ENCODE measurements at regions of chr1 and their contacts with region 1.

Region 1: DNA sequence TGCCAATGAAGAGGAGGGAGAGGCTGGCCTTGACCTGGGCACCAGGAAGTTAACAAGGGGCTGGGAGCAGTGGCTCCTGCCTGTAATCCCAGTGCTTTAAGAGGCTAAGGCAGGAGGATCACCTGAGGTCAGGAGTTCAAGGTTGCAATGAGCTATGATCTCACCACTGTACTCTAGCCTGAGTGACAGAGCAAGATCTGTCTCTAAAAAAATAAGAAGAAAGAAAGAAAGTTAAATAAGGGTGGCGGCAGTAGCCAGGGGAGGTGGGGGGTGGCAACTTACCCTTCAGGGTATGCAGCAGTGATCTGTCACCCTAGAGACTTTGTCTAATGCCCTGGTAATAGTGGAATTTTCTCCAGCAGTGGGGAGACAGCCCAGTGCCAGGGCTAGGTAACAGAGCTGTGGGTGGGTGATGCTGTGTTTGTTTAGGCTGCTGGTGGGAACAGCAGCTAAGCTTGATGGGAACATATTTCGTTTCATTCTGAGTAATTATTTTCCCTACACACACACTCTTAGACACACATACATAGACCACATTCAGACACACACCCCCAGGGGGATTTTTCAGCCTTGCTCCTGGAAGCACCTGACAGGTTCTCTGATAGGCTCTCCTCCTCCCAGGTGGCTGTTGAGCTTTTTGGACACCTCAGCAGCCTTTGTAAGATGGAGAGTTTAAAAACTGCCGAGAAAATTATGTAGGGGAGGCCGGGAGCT is 11.3 kb upstream of the SYT6 start:
- DNase-seq: no peak
- H3K4me3 ChIP-seq: no peak overlapping the region
- H3K27ac ChIP-seq: no peak overlapping the region
- H3K4me1 ChIP-seq: no peaks in the 10 kb centered on the region
- H3K27me3 ChIP-seq: peaks cover 3% of the 10 kb centered on the region
- CTCF ChIP-seq: no peak

Region 2: DNA sequence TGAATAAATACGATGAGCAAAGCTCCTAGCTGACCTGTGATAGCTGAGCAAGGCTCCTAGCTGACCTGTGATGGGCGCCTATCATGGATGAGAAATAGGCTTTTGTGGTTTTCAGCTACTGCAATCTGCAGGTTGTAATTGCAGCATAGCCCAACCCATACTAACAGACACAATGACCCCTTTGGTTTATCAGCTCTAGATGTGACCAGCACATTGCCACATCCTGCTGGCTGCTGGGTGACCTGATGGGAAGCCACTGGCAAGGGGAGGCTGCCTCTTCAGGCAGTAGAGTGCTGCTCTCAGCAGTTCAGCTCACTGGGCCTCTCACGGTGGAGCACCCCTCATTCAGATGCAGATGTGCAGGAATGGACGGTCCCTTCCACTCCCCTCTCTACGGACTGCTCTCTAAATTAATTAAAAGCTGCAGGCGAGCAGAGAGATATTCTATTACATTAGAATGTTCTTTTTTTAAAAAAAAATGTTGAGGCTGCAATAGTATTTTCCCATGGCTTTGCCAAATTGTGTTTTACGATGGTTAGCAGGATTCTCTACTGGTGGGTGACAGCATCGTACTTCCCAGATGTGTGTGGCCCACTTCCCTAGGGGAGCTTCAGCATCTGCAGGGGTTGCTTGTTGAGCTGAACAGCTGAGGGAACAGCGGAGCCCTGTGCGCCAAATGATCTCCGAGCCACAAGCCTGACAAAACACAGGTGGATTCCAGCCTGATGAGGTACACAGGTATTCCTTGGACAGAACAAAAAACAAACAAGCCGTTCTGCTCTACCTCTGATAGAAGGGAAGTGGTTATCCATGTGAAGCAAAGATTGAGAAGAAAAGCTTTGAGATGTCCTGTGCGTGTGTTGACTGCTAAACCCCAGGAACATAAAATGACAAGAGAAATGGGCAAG is 76.4 kb before region 1 on chr1:
- CTCF ChIA-PET with region 1: no interaction called
- dilution Hi-C with region 1: loop called (anchors 5 kb)
- in situ Hi-C with region 1: no loop called
- intact Hi-C with region 1: no loop called
- DNase-seq: peak; percentile 19
- H3K4me3 ChIP-seq: no peak overlapping the region
- H3K27ac ChIP-seq: no peak overlapping the region
- H3K4me1 ChIP-seq: peaks cover 27% of the 10 kb centered on the region
- H3K27me3 ChIP-seq: no peaks in the 10 kb centered on the region
- CTCF ChIP-seq: no peak

Region 3: DNA sequence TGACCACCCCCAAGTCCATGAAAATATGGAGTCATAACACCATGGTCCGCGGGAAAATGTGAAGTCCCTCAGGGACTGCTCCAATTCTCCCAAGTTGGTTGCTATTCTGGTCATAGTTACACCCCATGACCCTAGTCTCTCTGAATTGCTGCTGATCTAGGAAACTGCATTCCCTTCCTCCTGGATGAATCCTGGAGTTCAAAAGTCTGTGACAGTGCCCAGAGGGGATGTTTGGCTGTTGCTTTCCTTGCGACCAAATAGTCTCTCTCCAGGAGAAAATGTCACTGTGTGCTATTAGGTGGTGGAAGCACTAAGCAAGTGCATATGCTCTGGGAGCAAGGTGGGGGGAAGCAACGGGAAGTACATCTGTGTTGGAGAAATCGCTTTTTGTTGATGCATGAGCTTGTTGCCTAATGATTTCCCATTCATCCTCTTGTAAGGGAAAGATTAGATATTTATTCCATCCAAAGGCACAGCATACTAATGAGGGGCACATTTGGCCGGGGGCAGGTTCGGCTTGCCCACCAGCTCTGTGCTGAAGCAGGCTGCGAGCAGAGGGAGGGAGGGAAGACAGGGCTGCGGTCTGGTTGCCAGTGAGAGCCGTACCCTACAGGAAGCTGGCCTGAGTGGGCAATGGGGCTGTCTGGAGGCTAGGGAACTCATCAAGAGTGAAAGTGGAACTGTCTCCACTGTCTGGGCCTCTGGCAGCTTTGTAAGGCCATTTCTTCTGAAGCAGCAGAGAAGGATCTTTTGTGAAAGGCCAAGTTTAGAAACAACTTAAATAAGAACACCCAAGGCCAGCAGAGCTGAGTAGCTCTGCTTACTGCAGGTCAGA is 38.5 kb before region 1 on chr1:
- CTCF ChIA-PET with region 1: no interaction called
- dilution Hi-C with region 1: no loop called
- in situ Hi-C with region 1: no loop called
- intact Hi-C with region 1: no loop called
- DNase-seq: no peak
- H3K4me3 ChIP-seq: no peak overlapping the region
- H3K27ac ChIP-seq: no peak overlapping the region
- H3K4me1 ChIP-seq: peaks cover 16% of the 10 kb centered on the region
- H3K27me3 ChIP-seq: no peaks in the 10 kb centered on the region
- CTCF ChIP-seq: no peak

Measured in mammary epithelial cell (primary cell).